Right lobe of liver (tissue), 6 donors: ENCODE measurements at regions of chr9 and their contacts with region 1.

Region 1: DNA sequence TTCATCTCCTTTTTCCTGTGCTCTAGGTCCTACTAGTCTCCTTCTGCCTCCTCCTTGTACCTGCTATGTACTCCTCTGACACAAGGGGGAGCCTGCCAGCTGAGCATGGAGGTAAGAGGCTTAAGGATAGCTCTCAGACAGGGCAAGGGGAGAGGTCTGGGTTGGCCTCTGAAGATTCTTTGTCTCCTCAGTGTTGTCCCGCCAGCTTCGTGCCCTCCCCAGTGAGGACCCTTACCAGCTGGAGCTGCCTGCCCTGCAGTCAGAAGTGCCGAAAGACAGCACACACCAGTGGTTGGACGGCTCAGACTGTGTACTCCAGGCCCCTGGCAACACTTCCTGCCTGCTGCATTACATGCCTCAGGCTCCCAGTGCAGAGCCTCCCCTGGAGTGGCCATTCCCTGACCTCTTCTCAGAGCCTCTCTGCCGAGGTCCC is 3.8 kb downstream of the CREB3 start:
- DNase-seq: peak in 2 of 3 donors; percentile 54 to 64
- ATAC-seq: peak in 3 of 4 donors; percentile 6 to 28 (median 7)
- H3K4me3 ChIP-seq: no peak overlapping the region
- H3K27ac ChIP-seq: no peak overlapping the region
- H3K4me1 ChIP-seq: peaks cover 0 to 18% (median 4%) of the 10 kb centered on the region in 4 donors
- H3K27me3 ChIP-seq: no peaks in the 10 kb centered on the region
- CTCF ChIP-seq: peak; percentile 58 to 79 (median 73)
- POLR2A ChIP-seq: no peak

Region 2: GRCh38 chr9:35696525-35697215 is 39.5 kb before region 1 on chr9:
- intact Hi-C with region 1: loop called in 1 of 2 experiments (anchors 5 kb)
- DNase-seq: peak in 1 of 3 donors; percentile 65
- ATAC-seq: peak; percentile 79 to 92 (median 92)
- H3K4me3 ChIP-seq: no peak overlapping the region
- H3K27ac ChIP-seq: no peak overlapping the region
- H3K4me1 ChIP-seq: no peaks in the 10 kb centered on the region
- H3K27me3 ChIP-seq: no peaks in the 10 kb centered on the region
- CTCF ChIP-seq: peak; percentile 73 to 94 (median 90)
- POLR2A ChIP-seq: no peak

Region 3: GRCh38 chr9:36543916-36544315 is 807.7 kb after region 1 on chr9:
- intact Hi-C with region 1: no loop called
- DNase-seq: no peak
- ATAC-seq: no peak
- H3K4me3 ChIP-seq: no peak overlapping the region
- H3K27ac ChIP-seq: no peak overlapping the region
- H3K4me1 ChIP-seq: no peaks in the 10 kb centered on the region
- H3K27me3 ChIP-seq: no peaks in the 10 kb centered on the region
- CTCF ChIP-seq: no peak
- POLR2A ChIP-seq: no peak